ENCODE measurements at regions of chr12 and their contacts with region 1.

Region 1: GRCh38 chr12:56688129-56688845 is at the start of gene PTGES3:
- DNase-seq: peak; percentile 98
- ATAC-seq: peak; percentile 93 to 95 (median 94)
- H3K4me3 ChIP-seq: peak within 1 kb of the TSS; percentile 94
- H3K27ac ChIP-seq: peak within 1 kb of the TSS; percentile 99
- H3K4me1 ChIP-seq: peaks cover 23% of the 10 kb centered on the region
- H3K27me3 ChIP-seq: no peaks in the 10 kb centered on the region
- CTCF ChIP-seq: no peak
- total RNA-seq, gene PTGES3: 118 to 192 (median 148) TPM

Region 2: DNA sequence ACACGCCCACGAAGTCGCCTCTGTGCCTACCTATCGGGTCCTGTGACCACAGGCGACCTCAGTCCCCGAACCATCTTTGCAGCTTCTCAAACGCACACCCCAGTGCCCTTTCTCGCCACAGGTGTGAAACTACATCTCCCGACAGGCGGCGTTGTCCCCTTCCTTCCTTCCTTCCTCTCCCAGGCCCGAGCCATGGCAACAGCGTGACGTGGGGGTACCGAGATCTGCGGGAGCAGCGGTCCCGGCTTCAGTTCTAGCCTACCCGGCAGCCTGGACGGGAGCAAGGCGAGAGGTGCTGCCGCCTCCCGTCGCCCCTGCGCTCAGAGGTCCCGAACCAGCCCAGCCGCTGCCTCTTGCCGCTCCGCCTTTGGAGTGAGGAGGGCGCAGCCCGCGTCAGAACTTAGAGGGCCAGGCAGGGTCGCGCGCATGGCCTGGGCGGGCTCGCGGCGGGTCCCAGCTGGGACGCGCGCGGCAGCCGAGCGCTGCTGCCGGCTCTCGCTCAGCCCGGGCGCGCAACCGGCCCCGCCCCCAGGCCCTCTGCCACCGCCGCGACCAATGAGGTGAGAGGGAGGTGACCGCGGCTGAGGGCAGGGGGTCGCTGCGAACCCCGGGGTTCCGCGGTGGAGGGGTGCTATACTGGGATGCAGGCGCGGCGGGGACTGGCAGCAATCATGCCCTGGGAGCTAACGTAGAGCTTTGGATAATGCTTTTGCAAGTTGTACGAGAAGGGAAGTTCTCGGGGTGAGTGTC is 421.4 kb before region 1 on chr12 and contains the start of gene COQ10A:
- intact Hi-C with region 1: no loop called
- DNase-seq: peak; percentile 89 to 95
- ATAC-seq: peak; percentile 82 to 92 (median 86)
- H3K4me3 ChIP-seq: peak within 1 kb of the TSS; percentile 87
- H3K27ac ChIP-seq: peak within 1 kb of the TSS; percentile 96
- H3K4me1 ChIP-seq: peaks cover 56% of the 10 kb centered on the region
- H3K27me3 ChIP-seq: no peaks in the 10 kb centered on the region
- CTCF ChIP-seq: peak; percentile 58
- total RNA-seq, gene COQ10A: 24.3 to 86.6 (median 54.7) TPM

Region 3: DNA sequence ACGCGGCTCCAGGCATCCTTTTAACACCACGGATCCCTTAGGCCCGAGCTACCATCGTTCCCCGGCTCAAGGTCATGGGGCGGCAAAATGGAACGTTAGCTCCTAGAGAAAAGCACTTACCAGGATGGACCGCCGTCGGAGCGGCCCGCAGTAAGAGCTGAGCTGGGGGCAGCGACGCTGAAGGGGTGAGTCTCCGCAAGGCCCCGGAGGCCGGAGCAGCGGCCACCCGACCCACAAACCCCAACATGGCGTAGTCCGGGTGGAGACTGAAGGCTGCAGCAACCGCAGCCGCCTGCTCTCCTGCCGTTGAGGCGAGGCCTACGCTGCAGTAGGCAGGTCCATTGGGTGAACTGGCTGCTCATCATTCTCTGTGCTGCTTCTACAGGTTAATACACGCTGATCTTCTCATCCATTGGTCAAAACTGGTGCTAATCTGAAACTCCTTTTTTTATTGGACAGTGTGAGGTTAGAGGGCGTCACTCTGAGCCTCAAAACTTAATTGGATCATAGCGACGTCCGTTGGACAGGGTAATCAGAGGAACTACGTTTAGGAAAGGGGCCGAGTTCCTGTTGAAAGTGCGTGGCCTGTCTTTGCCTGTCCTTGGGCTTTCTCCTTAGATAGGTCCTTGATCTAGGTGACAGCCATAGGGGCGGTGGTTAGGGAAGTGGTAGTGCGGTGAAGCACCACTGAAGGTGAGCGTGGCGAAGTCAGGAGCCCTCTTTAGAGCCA is 42.4 kb before region 1 on chr12 and contains the start of gene ATP5F1B:
- intact Hi-C with region 1: loop called (anchors 5 kb)
- DNase-seq: peak; percentile 93 to 96
- ATAC-seq: peak; percentile 97 to 98 (median 98)
- H3K4me3 ChIP-seq: peak within 1 kb of the TSS; percentile 99
- H3K27ac ChIP-seq: peak within 1 kb of the TSS; percentile 98
- H3K4me1 ChIP-seq: peaks cover 29% of the 10 kb centered on the region
- H3K27me3 ChIP-seq: no peaks in the 10 kb centered on the region
- CTCF ChIP-seq: no peak
- total RNA-seq, gene ATP5F1B: 1,044 to 2,377 (median 1,300) TPM